ENCODE measurements at regions of chr14 and their contacts with region 1.

Region 1: DNA sequence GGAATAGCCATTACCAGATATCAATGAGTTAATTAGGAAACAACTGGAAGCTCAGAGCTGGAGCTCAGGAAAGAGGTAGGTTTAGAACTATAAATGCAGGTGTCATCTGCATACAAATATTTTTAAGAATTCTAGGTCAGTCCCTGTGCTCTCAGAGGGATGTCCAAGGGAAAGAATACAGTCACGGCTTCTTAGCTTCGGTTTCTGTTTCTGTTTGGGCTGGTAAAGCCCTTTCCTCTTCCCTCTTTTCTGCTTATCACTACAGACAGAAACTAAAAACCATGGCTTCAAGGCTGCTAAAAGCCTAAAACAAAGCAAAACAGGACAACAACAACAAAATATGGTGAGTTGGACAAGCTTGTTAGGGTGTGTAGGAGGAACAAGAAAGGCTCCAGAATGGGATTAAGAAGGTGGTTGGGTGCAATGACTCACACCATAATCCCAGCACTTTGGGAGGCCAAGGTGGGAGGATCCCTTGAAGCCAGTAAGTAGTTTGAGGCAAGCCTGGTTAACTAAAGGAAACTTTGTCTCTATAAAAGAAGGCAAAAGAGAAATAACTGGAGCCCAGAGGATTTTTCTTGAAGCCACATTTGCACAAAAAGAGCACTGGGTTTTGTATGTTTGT is 113.0 kb downstream of the SEC23A start:
- DNase-seq: no peak
- ATAC-seq: no peak
- H3K4me3 ChIP-seq: peak overlapping the region; percentile 15
- H3K27ac ChIP-seq: no peak overlapping the region
- H3K4me1 ChIP-seq: peaks cover 2% of the 10 kb centered on the region
- H3K27me3 ChIP-seq: no peaks in the 10 kb centered on the region

Region 2: GRCh38 chr14:38873941-38874612 is 116.0 kb before region 1 on chr14:
- intact Hi-C with region 1: loop called in 1 of 4 experiments (anchors 10 kb)
- DNase-seq: no peak
- ATAC-seq: no peak
- H3K4me3 ChIP-seq: no peak overlapping the region
- H3K27ac ChIP-seq: no peak overlapping the region
- H3K4me1 ChIP-seq: peaks cover 4% of the 10 kb centered on the region
- H3K27me3 ChIP-seq: no peaks in the 10 kb centered on the region

Measured in right cardiac atrium (tissue), 5 donors.